ENCODE measurements at regions of chr17 and their contacts with region 1.

Region 1: DNA sequence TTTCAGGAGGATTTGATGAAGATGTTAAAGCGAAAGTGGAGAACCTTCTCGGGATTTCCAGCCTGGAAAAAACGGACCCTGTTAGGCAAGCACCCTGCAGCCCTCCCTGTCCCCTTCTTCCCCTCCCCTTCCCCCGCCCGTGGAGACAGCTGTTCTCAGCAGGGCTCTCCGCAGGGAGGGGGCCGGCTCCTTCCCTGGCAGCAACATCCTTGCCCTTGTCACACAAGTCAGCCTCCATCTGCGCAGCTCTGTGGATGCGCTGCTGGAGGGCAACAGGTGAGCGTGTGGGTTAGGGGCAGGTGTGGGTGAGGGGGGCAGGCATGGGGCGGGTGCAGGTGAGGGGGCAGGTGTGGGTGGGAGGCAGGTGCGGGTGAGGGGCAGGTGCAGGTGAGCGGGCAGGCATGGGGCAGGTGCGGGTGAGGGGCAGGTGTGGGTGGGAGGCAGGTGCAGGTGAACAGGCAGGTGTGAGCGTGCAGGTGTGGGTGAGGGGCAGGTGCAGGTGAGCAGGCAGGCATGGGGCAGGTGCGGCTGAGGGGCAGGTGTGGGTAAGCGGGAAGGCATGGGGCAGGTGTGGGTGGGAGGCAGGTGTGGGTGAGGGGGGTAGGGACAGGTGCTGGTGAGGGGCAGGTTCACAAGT is 9.4 kb downstream of the CYBC1 start:
- H3K4me3 Mint-ChIP-seq: peak overlapping the region; percentile 70
- H3K27ac Mint-ChIP-seq: peak overlapping the region; percentile 94
- H3K4me1 Mint-ChIP-seq: peaks cover 64% of the 10 kb centered on the region
- H3K27me3 Mint-ChIP-seq: no peaks in the 10 kb centered on the region

Region 2: GRCh38 chr17:82402865-82403264 is 38.2 kb before region 1 on chr17:
- intact Hi-C with region 1: no loop called
- H3K4me3 Mint-ChIP-seq: no peak overlapping the region
- H3K27ac Mint-ChIP-seq: no peak overlapping the region
- H3K4me1 Mint-ChIP-seq: peaks cover 41% of the 10 kb centered on the region
- H3K27me3 Mint-ChIP-seq: peaks cover 7% of the 10 kb centered on the region

Region 3: DNA sequence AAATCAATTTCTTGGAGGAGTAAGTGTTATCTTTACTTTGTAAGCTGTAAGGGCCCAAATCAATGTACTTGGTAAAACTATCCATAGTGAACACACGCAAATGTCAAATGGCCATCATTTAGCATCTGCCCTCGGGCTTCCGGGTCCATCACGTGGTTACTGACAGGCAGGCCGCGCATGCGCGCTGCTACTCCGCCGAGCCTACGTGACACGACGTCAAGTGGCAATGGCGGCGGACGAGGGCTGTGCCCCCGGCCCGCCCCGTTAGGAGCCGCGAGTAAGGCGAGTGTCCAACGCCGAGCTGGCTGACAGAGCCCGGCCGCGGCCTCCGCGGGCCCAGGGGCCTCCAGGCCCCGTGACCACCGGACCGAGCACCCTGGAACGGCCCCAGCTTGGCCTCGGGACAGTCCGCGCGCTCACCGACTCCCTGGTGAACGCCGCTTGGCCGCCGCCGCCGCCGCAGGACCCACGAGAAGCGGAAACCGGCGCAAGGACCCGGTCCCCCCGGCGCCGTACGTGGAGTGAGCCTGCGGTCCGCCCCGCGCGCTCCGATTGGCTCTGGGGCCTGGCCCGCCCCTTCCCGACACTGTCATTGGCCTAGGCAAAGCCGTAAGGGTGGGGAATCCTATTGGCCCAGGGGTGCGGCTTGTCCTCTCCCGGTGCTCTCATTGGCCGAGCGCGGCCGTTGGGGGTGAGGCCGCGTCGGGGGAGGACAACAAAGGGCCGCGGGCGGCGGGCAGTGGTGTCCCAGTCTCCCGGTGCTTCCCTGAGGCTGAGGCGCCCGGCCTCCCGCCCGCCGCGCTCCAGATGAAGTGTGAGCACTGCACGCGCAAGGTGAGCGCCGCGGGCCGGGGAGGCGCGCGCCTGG is 17.1 kb after region 1 on chr17 and contains the start of gene NARF:
- intact Hi-C with region 1: loop called (anchors 2 kb)
- H3K4me3 Mint-ChIP-seq: peak within 1 kb of the TSS; percentile 94
- H3K27ac Mint-ChIP-seq: peak within 1 kb of the TSS; percentile 96
- H3K4me1 Mint-ChIP-seq: peaks cover 41% of the 10 kb centered on the region
- H3K27me3 Mint-ChIP-seq: no peaks in the 10 kb centered on the region

Measured in dendritic cell treated with granulocyte-macrophage colony-stimulating factor and Interleukin-4, amounts not matched to agents 40 ng/mL and 50 ng/mL, for 4 days (primary cell).